ENCODE measurements at regions of chr17 and their contacts with region 1.

Region 1: DNA sequence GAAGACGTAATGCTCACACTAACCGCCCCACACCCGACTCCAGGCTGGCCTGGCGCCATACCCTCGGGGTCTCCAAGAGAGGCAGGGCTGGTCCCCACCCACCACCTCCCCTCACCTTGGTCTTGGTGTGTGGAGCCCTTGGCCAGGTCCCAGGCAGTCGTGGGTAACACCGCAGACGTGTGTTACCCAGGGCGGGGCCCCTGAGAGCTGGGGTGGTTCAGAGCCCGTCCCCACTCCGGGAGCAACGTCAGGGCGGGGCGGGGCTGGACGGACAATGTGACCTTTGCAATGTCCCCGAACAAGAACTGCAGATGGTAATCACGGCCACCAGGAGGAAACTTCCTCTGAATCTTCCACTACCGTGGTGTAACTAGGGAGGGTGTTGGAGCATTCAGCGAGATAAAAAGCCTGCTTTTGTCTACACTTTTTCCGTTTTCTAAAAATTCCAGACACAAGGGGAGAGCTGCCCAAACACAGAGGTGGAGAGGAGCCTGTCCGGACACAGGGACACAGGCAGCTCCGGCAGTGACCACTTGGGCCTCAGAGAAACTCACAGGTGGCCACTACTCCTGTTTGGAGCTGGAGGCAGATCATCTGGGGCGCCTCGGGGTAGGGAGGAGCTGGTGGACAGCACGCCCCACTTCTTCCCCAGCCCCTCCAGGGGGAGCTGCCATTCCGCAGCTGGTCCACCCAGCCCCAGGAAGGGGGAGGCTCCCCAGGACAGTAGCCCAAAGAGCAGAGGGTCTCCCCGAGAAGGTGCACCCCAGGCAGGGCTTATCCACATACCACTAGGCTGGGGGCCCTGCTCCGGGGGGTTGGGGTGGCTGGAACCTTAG is 14.2 kb upstream of the SLC38A10 start:
- DNase-seq: peak; percentile 97

Region 2: GRCh38 chr17:82729479-82730260 is 1420.4 kb after region 1 on chr17:
- intact Hi-C with region 1: loop called in 1 of 2 experiments (anchors 5 kb)
- DNase-seq: no peak